Right ventricle myocardium inferior (tissue), 1 donor: ENCODE measurements at regions of chr10 and their contacts with region 1.

Region 1: GRCh38 chr10:89029785-89030437 is 39.3 kb downstream of the FAS start:
- DNase-seq: peak; percentile 84
- ATAC-seq: peak; percentile 56

Region 2: DNA sequence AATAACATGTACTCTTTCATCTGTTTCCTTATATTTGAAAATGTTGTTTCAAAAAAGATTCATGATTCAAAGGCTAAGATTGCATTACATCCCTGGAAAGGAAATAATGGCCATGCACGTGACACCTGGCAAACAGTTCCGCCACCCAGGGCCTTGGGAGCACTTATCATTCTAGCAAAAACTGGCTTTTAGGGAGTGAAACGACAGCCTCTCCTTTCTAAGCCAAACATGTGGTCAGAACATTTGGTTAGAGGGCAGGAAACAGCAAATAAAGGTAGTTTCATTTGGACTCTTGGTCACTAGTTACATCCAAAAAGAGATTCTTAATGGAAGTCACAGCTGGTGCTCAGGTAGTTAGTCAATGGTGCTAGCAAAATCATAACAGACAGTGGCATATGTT is 44.2 kb after region 1 on chr10:
- intact Hi-C with region 1: loop called (anchors 5 kb)
- DNase-seq: peak; percentile 66
- ATAC-seq: peak; percentile 76

Region 3: DNA sequence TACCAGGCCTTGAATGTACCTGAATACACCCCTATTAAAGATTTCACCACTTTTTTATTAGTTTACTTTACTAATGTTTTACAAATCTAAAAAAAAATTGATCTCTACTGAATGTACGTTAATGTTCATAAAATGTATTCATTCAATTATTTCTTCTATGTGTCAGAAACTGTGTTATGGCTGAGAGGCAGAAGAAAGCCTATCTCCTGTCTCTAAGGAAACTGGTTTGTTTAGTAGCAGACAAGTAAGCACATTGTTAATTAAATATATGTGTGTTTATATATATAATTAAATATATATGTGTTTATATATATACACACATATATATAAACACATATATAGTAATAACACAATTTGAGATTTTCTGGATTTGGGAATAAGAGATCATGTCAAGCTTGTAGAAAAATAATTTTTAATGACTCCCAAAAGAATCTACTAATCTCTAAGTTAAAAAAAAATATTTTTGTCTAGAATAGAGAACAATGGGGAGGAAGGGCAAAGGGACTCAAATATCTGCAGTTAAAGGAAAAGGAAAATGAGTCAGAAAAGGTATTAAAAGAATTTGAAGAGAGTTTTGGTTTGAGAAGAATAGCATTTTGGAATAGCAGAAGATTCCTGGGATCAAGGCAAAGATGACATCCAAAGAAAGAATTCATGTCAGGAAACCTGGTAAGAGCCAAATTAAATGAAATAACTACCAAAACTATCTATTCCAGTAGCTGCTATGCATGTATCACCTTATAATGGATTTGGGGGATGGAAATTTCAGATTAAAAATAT is 85.1 kb after region 1 on chr10:
- intact Hi-C with region 1: loop called (anchors 5 kb)
- DNase-seq: no peak
- ATAC-seq: no peak

Region 4: GRCh38 chr10:89217057-89217990 is 187.4 kb after region 1 on chr10:
- intact Hi-C with region 1: loop called (anchors 1 kb)
- DNase-seq: no peak
- ATAC-seq: no peak